ENCODE measurements at regions of chr10 and their contacts with region 1.

Region 1: DNA sequence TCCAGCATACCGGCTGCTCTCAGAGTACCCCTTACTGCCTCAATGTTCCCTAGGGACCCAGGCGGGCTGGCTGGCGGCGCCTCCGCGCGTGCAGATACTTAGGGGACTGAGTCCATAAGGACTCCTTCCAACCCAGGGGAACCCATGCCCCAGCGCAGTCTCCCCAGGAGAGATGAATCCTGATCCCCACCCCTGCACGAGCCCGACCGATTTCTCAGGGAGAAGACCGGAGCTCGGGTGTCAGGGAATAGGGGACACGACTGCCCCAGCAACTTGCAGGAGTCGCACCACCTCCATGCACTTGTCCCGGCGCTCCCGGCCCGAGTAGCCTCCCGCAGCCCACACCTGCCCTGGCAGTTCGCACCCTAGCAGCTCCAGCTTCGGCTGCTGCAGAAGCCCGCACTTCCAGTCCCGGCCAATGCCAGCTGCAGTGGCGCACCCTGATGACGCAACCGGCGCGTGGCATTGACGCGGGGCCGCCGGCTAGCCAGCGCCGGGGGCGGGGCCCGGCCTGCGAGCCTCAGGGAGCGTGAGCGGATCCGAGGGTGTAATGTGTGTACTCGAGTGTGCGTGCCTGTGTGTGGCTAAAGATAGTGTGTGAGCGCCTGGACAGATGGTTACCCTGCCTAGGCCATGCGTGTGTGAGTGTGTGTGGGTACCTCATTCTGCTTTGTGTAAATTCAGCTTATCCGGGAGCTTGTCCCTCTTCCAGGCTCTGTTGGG is at the start of gene GPAM:
- DNase-seq: peak; percentile 85
- ATAC-seq: peak; percentile 98
- H3K4me3 ChIP-seq: peak within 1 kb of the TSS; percentile 60
- H3K27ac ChIP-seq: peak within 1 kb of the TSS; percentile 82
- H3K4me1 ChIP-seq: 0 out of 2 replicates have a peak, but pooled peaks cover 3% of the 10 kb centered on the region
- H3K27me3 ChIP-seq: no peaks in the 10 kb centered on the region
- CTCF ChIP-seq: no peak
- POLR2A ChIP-seq: peak; percentile 68; the same call in 1 of the 2 replicates
- RAD21 ChIP-seq: 0 out of 2 replicates have a peak, but pooled peaks have one; percentile 12
- total RNA-seq, gene GPAM: 11.5 and 13.1 TPM in 2 replicates

Region 2: DNA sequence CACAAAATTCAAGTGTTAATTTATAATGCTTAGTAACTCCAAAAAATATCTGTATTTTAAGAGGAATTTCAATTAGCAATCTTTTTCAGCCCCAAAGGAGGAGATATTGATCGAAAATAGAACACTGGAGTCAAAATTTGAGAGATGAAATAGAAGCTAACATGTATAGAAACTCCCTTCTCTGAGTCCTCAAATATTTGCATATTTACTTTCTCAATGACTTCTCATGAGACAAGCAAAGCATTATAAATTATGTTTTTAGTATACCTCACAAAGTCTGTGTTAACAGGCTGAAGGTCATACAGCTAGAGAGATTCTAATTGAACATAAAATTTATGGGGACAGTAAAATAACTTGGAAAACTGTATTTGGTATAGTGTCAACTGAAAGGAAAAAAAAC is 260.5 kb before region 1 on chr10:
- CTCF ChIA-PET with region 1: no interaction called
- POLR2A ChIA-PET with region 1: no interaction called
- dilution Hi-C with region 1: no loop called
- in situ Hi-C with region 1: no loop called
- intact Hi-C with region 1: no loop called
- DNase-seq: no peak
- ATAC-seq: no peak
- H3K4me3 ChIP-seq: no peak overlapping the region
- H3K27ac ChIP-seq: no peak overlapping the region
- H3K4me1 ChIP-seq: no peaks in the 10 kb centered on the region
- H3K27me3 ChIP-seq: no peaks in the 10 kb centered on the region
- CTCF ChIP-seq: no peak
- POLR2A ChIP-seq: no peak
- RAD21 ChIP-seq: no peak

Region 3: DNA sequence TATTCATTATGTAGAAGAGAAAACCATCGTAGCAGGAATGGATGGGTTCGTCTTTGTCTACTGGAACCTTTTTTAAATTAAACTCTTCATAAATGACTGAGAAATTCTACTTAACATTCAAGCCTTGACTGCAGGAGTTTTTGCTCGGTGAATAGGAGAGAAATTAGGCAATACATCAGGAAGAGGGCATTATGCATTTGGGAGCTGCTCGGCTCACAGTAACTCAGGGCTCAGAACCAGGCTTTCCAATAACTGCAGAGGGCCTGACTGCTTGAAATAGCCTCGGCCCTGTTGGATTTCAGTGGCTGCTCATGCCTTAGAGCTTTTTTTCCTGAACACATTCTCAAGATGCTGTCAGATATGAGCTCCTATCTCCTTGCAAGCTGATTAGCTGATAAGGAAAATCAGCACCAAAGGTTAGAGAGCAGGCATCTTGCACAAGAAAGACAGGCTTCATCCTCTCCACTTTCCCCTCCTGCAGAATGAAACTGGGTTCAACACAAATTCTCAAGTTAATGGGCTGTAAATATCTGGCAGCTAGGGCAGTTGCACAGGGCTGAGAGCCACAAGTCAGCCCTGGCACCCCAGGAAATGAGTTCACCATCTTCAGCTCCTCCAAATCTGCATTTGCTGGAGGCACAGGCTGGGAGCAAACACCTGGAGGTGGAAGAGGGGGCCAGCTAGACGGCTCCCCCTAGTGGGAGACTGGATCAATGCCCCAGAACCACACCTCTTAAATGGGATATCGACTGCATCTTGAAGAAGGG is 124.1 kb after region 1 on chr10:
- CTCF ChIA-PET with region 1: no interaction called
- POLR2A ChIA-PET with region 1: no interaction called
- dilution Hi-C with region 1: no loop called
- in situ Hi-C with region 1: loop called (anchors 5 kb)
- intact Hi-C with region 1: loop called (anchors 1 kb)
- DNase-seq: peak; percentile 43
- ATAC-seq: peak; percentile 89
- H3K4me3 ChIP-seq: no peak overlapping the region
- H3K27ac ChIP-seq: no peak overlapping the region
- H3K4me1 ChIP-seq: no peaks in the 10 kb centered on the region
- H3K27me3 ChIP-seq: no peaks in the 10 kb centered on the region; the same call in none of the 2 replicates
- CTCF ChIP-seq: peak; percentile 64
- POLR2A ChIP-seq: no peak
- RAD21 ChIP-seq: peak; percentile 70

Region 4: GRCh38 chr10:112434988-112435619 is 251.6 kb after region 1 on chr10:
- CTCF ChIA-PET with region 1: no interaction called
- POLR2A ChIA-PET with region 1: no interaction called
- dilution Hi-C with region 1: no loop called
- in situ Hi-C with region 1: loop called (anchors 10 kb)
- intact Hi-C with region 1: loop called (anchors 5 kb)
- DNase-seq: peak; percentile 60
- ATAC-seq: peak; percentile 69
- H3K4me3 ChIP-seq: no peak overlapping the region
- H3K27ac ChIP-seq: no peak overlapping the region
- H3K4me1 ChIP-seq: no peaks in the 10 kb centered on the region
- H3K27me3 ChIP-seq: no peaks in the 10 kb centered on the region
- CTCF ChIP-seq: peak; percentile 52
- POLR2A ChIP-seq: no peak
- RAD21 ChIP-seq: peak; percentile 68

Region 5: DNA sequence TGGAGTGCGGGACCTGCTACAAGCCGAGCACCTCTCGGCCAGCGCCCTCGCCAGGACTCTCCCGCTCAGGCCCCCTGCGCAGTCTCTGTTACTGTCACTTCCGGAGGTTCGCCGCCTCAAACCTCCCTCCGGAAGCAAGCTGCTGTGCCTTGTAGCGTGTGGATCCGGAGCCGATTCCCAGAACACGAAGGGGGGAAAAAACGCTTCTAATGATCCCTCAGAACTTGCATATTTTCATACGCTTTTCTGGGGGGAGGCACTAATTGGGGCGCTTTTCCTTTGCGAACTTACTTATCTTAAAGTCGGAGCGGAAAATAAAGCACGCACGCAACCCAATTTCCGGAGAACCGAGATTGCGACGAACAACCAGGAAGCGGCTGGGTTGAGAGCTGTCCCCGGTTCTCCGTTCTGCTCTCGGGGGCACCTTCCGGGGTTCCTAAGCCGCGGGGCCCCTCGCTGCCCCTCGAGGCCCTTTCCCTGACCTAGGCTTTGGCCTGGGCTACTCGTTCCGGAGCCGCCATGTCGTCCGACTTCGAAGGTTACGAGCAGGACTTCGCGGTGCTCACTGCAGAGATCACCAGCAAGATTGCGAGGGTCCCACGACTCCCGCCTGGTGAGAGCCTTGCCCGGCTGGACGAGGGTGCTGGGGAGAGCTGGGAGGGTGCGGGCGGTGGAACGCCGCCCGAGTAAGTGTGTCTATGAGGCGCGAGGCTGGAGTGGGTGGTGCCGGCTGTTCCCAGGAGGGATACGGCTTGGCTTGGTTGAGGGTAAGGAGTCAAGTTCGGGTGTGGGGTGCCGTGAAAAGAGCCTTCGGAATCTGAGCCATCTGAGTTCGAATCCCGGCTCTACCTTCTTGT is 263.6 kb after region 1 on chr10 and contains the starts of genes VTI1A and ZDHHC6:
- CTCF ChIA-PET with region 1: no interaction called
- POLR2A ChIA-PET with region 1: no interaction called
- dilution Hi-C with region 1: no loop called
- in situ Hi-C with region 1: loop called (anchors 10 kb)
- intact Hi-C with region 1: no loop called
- DNase-seq: peak; percentile 84
- ATAC-seq: peak; percentile 96
- H3K4me3 ChIP-seq: peak within 1 kb of the TSS; percentile 95
- H3K27ac ChIP-seq: peak within 1 kb of the TSS; percentile 92
- H3K4me1 ChIP-seq: no peaks in the 10 kb centered on the region
- H3K27me3 ChIP-seq: no peaks in the 10 kb centered on the region
- CTCF ChIP-seq: peak; percentile 24; the same call in 1 of the 2 replicates
- POLR2A ChIP-seq: peak; percentile 67; the same call in 1 of the 2 replicates
- RAD21 ChIP-seq: 0 out of 2 replicates have a peak, but pooled peaks have one; percentile 10
- total RNA-seq, gene VTI1A: 24.9 and 35.0 TPM in 2 replicates
- total RNA-seq, gene ZDHHC6: 17.4 and 22.2 TPM in 2 replicates